Activated B cell treated with CpG ODN at 0.5 μM for 24 hours (primary cell): ENCODE measurements at regions of chr9 and their contacts with region 1.

Region 1: GRCh38 chr9:93119953-93120845 is 13.9 kb downstream of the NINJ1 start:
- DNase-seq: no peak
- ATAC-seq: peak; percentile 93
- H3K4me3 Mint-ChIP-seq: peak overlapping the region; percentile 67
- H3K27ac Mint-ChIP-seq: peak overlapping the region; percentile 72
- H3K4me1 Mint-ChIP-seq: peaks cover 21% of the 10 kb centered on the region
- H3K27me3 Mint-ChIP-seq: no peaks in the 10 kb centered on the region
- CTCF ChIP-seq: no peak

Region 2: GRCh38 chr9:92808726-92809451 is 311.3 kb before region 1 on chr9:
- CTCF ChIA-PET with region 1: no interaction called
- POLR2A ChIA-PET with region 1: no interaction called
- intact Hi-C with region 1: no loop called
- DNase-seq: peak; percentile 62
- ATAC-seq: peak; percentile 72
- H3K4me3 Mint-ChIP-seq: peak overlapping the region; percentile 84
- H3K27ac Mint-ChIP-seq: peak overlapping the region; percentile 37
- H3K4me1 Mint-ChIP-seq: peaks cover 18% of the 10 kb centered on the region
- H3K27me3 Mint-ChIP-seq: peaks cover 39% of the 10 kb centered on the region
- CTCF ChIP-seq: no peak

Region 3: DNA sequence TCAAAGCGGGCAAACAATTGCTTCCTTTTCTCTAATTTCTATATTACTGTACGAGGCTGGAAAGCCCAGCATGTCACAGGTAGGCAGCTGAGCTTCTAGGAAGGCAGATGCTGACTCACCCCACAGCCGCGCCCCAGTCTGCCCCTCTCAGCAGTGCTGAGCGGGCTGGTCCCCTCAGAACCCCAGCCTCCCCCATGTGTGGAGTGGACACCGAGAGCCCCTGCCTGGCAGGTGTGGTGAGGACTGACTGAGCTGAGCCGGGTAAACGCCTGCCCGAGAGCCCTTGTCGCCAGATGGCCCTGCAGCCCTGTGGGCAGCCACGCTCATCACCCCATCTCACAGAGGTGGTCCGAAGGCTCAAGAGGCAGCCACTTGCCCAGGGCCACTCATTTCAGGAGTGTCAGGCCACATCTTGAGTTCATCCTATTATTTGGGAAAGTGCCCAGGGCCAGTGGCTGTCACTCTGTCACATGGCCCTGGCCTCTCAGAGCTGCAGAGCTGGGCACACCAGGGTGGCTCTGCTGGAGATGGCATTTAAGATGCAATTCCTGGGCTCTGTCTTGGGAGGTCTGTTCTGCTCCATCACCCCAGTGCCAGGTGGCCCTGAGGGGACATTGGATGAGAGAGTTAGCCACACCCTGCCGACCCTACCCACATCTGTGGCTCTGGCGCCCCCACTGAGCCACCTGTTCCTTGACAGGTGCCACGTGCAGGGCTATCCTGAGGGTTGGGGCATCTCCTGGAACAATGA is 11.7 kb before region 1 on chr9:
- CTCF ChIA-PET with region 1: interaction called, 27 read pairs
- POLR2A ChIA-PET with region 1: interaction called, 4 read pairs
- intact Hi-C with region 1: no loop called
- DNase-seq: no peak
- ATAC-seq: peak; percentile 56
- H3K4me3 Mint-ChIP-seq: no peak overlapping the region
- H3K27ac Mint-ChIP-seq: no peak overlapping the region
- H3K4me1 Mint-ChIP-seq: peaks cover 28% of the 10 kb centered on the region
- H3K27me3 Mint-ChIP-seq: no peaks in the 10 kb centered on the region
- CTCF ChIP-seq: no peak

Region 4: DNA sequence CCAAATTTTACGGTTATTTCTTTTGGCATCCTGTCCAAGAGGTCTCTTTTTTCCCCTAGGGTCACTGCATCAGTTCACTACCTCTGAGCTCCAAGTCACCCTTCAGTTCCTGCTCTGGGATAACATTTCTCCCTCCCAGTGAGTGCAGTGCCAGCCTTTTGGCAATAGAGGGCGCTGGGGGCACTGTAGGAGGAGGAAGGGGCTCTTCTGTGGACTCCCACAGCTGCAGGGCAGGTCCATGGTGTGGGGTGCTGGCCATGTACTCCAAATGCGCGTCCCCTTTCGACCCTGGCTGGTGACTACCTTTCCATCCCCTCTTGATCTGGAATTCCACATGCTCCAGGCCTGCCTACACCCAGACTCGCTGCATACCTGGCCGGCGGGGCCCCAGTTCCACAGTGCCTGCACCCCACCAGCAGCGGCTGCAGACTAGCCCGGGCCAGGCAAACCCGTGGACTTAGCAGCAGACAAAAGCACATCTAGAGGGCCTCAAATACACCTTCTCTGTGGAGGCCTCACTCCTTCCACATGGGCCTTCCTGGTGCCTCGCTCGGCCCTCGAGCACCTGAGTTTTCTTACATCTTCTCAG is 34.2 kb after region 1 on chr9:
- CTCF ChIA-PET with region 1: no interaction called
- POLR2A ChIA-PET with region 1: no interaction called
- intact Hi-C with region 1: loop called (anchors 2 kb)
- DNase-seq: no peak
- ATAC-seq: peak; percentile 31
- H3K4me3 Mint-ChIP-seq: no peak overlapping the region
- H3K27ac Mint-ChIP-seq: no peak overlapping the region
- H3K4me1 Mint-ChIP-seq: no peaks in the 10 kb centered on the region
- H3K27me3 Mint-ChIP-seq: no peaks in the 10 kb centered on the region
- CTCF ChIP-seq: no peak

Region 5: DNA sequence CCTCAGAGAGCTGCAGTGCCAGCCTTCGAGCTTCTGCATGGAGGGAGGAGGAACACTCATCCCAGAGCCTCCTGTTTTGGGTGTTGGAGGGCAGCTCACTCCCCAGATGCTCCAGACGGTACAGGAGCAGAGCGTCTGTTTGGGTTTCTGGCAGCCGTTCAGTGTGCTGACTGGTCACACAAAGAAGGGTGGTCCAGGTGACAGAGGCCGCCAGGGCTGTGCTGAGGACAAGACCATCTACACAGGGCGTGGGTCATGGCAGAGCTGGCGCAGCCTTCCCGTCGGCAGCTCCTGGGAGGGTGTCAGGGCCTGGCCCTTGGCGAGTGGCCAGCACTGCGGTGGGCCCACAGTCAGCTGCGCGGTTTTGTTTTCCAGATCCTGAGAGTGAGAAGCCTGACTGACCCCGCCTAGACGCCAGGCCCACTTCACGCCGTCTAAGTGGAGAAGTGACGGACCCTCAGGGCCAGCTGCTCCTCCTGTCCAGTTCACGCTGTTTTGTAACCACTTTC is 199.8 kb after region 1 on chr9:
- CTCF ChIA-PET with region 1: no interaction called
- POLR2A ChIA-PET with region 1: no interaction called
- intact Hi-C with region 1: no loop called
- DNase-seq: no peak
- ATAC-seq: no peak
- H3K4me3 Mint-ChIP-seq: no peak overlapping the region
- H3K27ac Mint-ChIP-seq: no peak overlapping the region
- H3K4me1 Mint-ChIP-seq: no peaks in the 10 kb centered on the region
- H3K27me3 Mint-ChIP-seq: peaks cover 29% of the 10 kb centered on the region
- CTCF ChIP-seq: no peak